Cardiac septum (tissue), 1 donor: ENCODE measurements at regions of chr4 and their contacts with region 1.

Region 1: DNA sequence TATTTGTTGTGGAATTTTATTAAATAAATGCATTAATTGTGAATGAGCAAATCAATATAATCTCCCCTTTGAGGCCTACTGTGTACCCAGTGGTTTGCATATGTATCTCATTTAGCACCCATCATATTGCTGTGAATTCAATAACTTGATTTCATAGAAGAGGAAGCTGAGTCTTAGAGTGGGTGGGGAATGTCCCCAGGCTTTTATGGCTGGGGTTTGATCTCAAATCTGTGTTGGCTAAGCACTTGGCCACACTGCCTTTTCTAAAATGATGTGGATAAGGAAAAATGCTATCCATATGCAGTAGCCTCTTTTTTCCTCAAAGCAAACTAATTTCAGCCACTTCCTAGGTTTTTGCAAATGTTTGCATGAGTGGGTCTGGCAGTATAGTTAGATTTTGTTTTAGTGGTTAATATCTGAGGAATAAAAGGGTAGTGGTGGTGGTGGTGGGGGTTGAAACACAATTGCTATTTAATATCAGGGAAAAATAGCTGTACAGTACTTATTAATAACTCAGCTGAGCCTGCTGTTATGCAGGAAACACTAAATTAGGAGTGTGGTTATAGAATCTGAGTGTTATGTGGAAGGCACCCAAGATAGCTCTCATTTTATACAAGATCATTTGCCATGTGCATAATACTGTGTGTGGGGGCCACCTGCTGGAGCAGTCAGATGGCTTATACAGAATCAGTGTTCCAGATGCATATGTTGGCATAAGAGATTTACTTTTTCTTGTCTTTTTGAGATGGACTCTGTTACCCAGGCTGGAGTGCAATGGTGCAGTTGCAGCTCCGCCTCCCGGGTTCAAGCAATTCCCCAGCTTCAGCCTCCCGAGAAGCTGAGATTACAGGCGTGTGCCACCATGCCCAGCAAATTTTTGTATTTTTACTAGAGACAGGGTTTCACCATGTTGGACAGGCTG is 108.0 kb downstream of the TMEM131L start:
- DNase-seq: no peak

Region 2: GRCh38 chr4:153142700-153143438 is 431.3 kb before region 1 on chr4:
- intact Hi-C with region 1: loop called (anchors 5 kb)
- DNase-seq: no peak

Region 3: DNA sequence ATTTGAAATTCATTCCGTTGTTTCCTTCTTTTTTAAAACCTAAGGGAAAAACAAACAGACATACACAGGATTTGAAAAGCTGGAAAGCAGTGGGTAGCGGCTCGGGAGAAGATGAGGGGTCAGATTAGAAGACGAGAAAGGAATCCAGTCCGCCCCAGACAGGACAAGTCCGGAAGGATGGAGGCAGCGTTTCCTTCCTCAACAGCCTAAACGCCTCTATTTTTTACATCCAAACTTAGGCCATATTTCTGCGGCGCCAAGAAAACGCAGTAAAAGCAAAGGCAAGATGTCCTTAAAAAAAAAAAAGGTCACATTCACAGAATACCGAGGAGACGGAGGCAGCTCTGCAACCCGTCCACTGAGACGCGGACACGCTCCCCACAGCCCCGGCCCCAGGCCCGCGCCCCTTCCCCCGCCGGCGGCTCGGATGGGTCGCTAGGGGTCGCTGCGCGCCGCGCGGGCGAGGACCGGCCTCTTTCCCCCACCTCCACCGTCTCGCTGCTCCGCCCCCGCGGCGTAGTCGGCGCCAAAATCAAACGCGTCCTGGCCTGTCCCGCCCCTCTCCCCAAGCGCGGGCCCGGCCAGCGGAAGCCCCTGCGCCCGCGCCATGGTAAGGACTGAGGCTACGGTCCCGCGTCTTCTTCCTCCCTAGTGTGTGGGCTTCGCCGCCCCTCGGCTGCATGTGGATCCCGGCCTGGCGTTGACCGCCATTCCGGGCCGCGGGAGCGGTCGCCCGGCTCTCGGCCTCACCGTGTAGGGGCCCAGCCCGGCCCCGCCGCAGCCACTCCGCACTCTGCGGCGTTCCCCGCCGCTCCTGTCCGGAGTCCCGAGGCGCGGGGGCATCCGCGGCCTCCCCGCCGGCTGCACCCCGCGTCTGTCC is 229.8 kb before region 1 on chr4 and contains the start of gene MND1:
- intact Hi-C with region 1: loop called (anchors 1 kb)
- DNase-seq: peak; percentile 93
- total RNA-seq, gene MND1: not detected

Region 4: DNA sequence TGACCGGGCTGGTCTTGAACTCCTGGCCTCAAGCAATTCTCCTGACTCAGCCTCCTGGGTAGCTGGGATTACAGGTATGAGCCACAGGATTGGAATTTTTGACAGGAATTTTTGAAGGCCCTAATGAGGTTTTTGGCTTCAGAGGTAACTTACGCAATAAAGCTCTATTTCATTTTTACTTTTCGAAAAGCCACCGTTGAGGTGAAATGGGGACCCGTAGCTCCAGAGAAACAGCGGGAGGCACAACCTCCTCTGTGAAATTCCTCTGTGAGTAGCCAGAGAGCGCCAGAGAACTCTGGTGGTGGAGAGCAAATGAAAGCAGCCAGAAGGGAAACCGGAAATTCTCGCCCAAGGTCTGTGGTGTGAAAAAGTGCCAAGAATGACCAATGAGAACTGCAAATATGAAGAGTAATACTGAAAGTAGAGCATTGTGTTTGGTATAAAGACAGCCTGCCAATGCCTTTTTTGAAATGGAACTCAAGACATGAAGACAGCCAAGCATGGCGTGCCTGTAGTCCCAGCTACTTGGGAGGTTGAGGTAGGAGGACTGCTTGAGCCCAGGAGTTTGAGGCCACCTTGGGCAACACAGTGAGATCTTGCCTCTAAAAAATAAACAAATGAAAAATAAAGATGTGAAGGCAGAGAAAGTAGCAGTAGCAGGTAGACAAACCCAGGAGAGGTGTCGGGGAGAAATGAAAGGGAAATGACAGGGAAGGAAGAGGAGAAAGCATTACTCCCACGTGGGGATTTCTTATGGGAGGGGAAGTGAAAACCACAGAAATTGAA is 141.0 kb before region 1 on chr4:
- intact Hi-C with region 1: loop called (anchors 2 kb)
- DNase-seq: peak; percentile 81

Region 5: DNA sequence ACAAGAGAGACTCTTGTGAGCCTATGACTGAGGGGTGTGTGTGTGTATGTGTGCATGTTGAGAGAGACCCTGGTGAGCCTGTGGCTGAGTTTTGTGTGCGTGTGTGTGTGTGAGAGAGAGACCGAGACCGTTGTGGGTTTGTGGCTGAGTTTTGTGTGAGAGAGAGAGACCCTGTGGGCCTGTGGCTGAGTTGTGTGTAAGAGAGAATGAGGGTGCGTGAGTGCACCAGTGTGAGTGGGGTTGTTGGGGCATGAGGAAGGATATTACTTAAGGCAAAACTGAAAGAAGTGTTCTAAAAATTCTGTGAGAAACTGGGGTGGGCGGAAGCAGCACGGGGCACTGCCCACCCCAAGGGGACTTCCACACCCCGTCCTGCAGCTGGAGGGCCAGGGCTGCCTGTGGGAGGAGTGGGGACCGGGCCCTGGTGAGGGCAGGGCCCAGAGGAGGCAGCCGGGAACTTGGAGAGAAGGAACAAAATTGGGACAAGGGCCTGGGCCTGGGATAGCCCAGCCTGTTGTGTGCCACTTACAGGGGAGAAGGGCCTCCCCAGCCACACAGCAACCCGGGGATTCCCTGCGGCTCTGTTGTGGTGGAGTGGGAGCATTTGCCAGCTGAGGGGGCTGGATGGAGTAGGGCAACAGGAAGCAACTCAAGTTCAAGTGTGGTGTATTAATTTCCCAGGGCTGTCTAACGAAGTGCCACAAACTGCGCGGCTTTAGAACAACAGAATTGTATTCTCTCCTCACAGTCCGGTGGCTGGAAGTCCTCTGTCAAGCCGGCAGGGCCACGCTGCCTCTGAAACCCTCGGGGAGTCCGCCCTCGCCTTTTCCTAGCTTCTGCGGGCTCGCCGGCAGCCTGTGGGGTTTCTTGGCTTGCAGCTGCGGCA is 85.9 kb before region 1 on chr4:
- intact Hi-C with region 1: loop called (anchors 5 kb)
- DNase-seq: peak; percentile 86

Region 6: DNA sequence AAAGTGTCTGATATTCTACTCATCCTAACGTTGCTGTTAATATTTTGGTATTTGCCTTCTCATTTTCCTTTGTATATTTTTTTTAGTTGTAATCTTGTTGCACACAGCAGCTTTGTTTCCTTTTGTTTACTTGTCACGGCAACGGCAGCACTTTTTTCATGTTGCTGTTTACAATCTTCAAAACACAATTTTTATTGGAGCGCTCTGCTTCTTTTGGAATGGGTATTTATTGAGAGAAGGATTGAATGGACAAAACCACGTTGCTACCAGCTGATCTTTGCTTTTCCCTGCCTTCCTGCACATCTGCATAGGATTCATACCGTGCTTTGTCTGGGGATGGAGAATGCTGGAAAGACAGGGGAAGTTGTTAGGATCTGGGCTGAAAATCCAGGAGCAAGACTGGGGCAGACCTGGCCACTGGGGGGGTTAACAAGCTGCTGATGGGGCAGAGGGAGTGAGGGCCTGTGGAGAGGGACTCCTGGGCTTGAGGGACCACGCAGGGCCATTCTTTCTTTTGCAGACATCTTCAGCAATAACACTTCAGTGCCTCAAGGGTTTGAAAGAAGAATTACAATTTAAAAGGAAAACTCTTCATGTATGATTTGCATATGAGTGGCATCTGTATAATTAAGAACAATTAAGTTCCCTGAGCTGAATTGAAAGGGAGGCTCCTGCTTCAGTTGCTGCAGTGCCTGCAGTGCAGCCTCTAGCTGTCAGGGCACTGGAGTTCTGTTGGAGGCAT is 38.2 kb before region 1 on chr4:
- intact Hi-C with region 1: loop called (anchors 5 kb)
- DNase-seq: no peak